Activated CD4-positive, alpha-beta T cell treated with anti-CD3 and anti-CD28 coated beads, Interleukin-2, amount 10 ng/mL, durations not matched to agents 24 days and 14 days (primary cell): ENCODE measurements at regions of chr17 and their contacts with region 1.

Region 1: GRCh38 chr17:58352014-58352842 is at the start of gene SUPT4H1:
- DNase-seq: peak; percentile 97
- H3K4me3 Mint-ChIP-seq: peak within 1 kb of the TSS; percentile 100
- H3K27ac Mint-ChIP-seq: peak within 1 kb of the TSS; percentile 99
- H3K4me1 Mint-ChIP-seq: peaks cover 45% of the 10 kb centered on the region
- H3K27me3 Mint-ChIP-seq: no peaks in the 10 kb centered on the region
- total RNA-seq, gene SUPT4H1: 139 and 143 TPM in 2 replicates

Region 2: DNA sequence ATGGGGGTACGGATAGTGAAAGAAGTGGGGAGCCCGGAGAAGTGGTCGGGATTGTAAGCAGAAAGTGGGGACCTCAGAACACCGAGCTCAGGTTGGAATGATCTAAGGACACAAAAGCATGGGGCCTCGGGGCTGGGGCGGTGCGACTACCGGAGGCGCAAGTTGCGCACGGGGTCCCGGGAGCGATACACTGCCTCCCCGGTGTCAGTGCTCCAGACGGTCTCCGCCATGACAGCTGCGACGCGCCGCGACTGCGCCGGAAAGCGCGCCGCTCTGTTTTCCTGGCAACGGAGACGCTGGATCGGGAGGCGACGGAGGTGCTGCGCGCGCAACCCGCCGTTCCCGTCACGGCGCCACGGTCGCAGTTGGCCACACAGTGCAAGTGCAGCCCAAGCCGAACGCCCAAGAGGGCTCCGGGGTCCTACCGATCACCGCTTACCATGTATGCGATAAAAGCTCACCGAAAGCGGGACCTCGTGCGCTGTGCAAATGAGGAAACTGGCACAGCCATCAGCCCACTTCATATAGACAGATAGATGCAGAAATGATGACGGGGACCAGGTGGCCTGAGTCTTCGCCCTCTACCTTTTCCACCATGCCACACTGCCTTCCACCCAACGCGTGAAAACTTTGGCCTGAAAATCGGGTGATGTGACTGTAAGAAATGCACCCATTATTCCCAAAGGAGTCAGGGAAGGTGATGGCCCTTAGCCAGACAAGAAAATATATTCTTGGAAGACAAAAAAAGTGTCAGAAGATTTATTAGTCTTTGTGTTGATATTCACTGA is 133.0 kb before region 1 on chr17 and contains the start of gene MKS1:
- intact Hi-C with region 1: loop called (anchors 5 kb)
- DNase-seq: peak; percentile 99
- H3K4me3 Mint-ChIP-seq: peak within 1 kb of the TSS; percentile 90
- H3K27ac Mint-ChIP-seq: peak within 1 kb of the TSS; percentile 94
- H3K4me1 Mint-ChIP-seq: peaks cover 22% of the 10 kb centered on the region
- H3K27me3 Mint-ChIP-seq: peaks cover 13% of the 10 kb centered on the region
- total RNA-seq, gene MKS1: 21.7 and 23.1 TPM in 2 replicates

Region 3: GRCh38 chr17:58329035-58329809 is 23.0 kb before region 1 on chr17:
- intact Hi-C with region 1: loop called (anchors 1 kb)
- DNase-seq: peak; percentile 95
- H3K4me3 Mint-ChIP-seq: peak overlapping the region; percentile 91
- H3K27ac Mint-ChIP-seq: peak overlapping the region; percentile 96
- H3K4me1 Mint-ChIP-seq: peaks cover 45% of the 10 kb centered on the region
- H3K27me3 Mint-ChIP-seq: peaks cover 4% of the 10 kb centered on the region

Region 4: DNA sequence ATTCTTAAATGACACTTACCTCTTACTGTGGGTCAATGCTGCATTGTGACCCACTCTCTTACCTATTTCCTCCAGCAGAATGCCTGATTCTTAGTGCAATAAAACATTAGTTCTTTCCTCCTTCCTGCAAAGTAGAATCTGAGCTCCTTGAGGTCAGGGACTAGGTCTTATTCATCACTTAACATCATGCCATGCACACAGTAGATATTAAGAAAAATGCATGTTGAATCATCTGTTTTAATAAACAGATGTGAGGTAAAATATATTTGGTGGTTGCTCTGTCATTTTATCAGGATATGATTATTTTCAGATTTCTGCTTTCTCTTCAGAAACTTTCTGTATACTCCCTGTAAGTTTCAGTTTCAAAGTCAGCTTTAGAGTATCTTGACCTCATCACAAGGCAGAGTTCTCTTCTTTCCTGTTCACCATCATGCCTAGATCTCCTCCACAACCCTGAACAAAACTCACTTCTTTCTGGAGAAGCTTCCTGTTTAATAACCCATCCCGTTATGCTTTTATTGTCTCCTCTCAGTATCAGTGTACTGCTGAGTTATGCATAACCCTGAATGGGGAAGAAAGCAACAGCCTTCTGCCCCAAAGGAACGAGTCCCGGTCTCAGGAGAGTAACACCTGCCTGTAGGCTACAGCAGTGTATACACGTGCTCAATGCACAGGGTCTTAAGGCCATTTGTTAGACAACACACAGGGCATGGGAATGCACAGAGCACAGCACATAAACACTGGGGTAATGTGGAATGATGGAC is 30.1 kb after region 1 on chr17:
- intact Hi-C with region 1: loop called (anchors 2 kb)
- DNase-seq: peak; percentile 67
- H3K4me3 Mint-ChIP-seq: peak overlapping the region; percentile 37
- H3K27ac Mint-ChIP-seq: peak overlapping the region; percentile 68
- H3K4me1 Mint-ChIP-seq: peaks cover 45% of the 10 kb centered on the region
- H3K27me3 Mint-ChIP-seq: no peaks in the 10 kb centered on the region